PC-9 (cell line): ENCODE measurements at regions of chr1 and their contacts with region 1.

Region 1: GRCh38 chr1:92707292-92707691 is 77.6 kb downstream of the EVI5 start:
- DNase-seq: peak in 1 of 2 experiments; percentile 44
- H3K4me3 ChIP-seq: no peak overlapping the region
- H3K27ac ChIP-seq: no peak overlapping the region
- H3K4me1 ChIP-seq: peaks cover 17% of the 10 kb centered on the region; the same call in 1 of the 2 replicates
- H3K27me3 ChIP-seq: no peaks in the 10 kb centered on the region
- CTCF ChIP-seq: no peak

Region 2: GRCh38 chr1:92411511-92411910 is 295.8 kb before region 1 on chr1:
- CTCF ChIA-PET with region 1: no interaction called
- POLR2A ChIA-PET with region 1: interaction called, 14 read pairs
- intact Hi-C with region 1: no loop called
- DNase-seq: no peak
- H3K4me3 ChIP-seq: no peak overlapping the region
- H3K27ac ChIP-seq: no peak overlapping the region
- H3K4me1 ChIP-seq: 0 out of 2 replicates have a peak, but pooled peaks cover 9% of the 10 kb centered on the region
- H3K27me3 ChIP-seq: no peaks in the 10 kb centered on the region
- CTCF ChIP-seq: no peak

Region 3: GRCh38 chr1:92951141-92951582 is 243.9 kb after region 1 on chr1:
- CTCF ChIA-PET with region 1: no interaction called
- POLR2A ChIA-PET with region 1: no interaction called
- intact Hi-C with region 1: no loop called
- DNase-seq: peak; percentile 22 to 79
- H3K4me3 ChIP-seq: peak overlapping the region; percentile 22; the same call in 1 of the 2 replicates
- H3K27ac ChIP-seq: peak overlapping the region; percentile 86
- H3K4me1 ChIP-seq: peaks cover 26% of the 10 kb centered on the region
- H3K27me3 ChIP-seq: no peaks in the 10 kb centered on the region
- CTCF ChIP-seq: no peak